Caco-2 (cell line): ENCODE measurements at regions of chr4 and their contacts with region 1.

Region 1: GRCh38 chr4:22515145-22515887 is 550 bp downstream of the ADGRA3 start:
- DNase-seq: peak; percentile 79 to 83
- H3K4me3 ChIP-seq: peak overlapping the region; percentile 60
- H3K4me3 Mint-ChIP-seq: peak overlapping the region; percentile 95
- H3K27ac Mint-ChIP-seq: peak overlapping the region; percentile 97
- H3K4me1 ChIP-seq: peaks cover 11% of the 10 kb centered on the region
- H3K4me1 Mint-ChIP-seq: peaks cover 10% of the 10 kb centered on the region
- H3K27me3 ChIP-seq: no peaks in the 10 kb centered on the region
- H3K27me3 Mint-ChIP-seq: no peaks in the 10 kb centered on the region
- CTCF ChIP-seq: no peak

Region 2: DNA sequence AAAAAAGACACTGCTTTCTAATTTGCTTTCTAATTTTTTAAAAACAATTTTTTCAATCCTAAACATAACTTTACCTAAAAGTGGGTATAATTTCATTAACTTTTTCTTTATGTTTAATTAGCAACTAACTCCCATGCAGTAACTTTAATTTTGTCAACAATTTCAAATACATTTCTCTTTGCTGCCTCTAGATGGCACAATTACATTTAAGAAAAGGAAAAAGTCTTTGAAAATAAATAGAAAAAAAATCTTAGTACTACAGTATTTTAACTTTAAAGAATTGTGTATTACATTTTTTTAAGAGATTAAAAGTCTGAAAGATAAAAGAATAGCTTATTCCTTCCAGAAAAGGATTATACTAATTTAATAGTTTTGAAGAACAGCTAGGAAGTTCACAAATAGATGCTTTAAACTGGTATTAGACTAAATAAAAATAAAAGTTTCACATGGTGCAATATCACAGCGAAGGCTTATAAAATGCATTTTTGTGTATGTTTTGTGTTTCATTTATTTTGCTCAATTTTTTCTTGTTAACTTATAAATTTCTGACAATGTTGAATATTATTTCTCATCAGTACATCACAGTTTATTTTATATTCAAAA is 104.6 kb before region 1 on chr4:
- CTCF ChIA-PET with region 1: no interaction called
- POLR2A ChIA-PET with region 1: no interaction called
- intact Hi-C with region 1: loop called (anchors 5 kb)
- DNase-seq: no peak
- H3K4me3 ChIP-seq: no peak overlapping the region
- H3K4me3 Mint-ChIP-seq: no peak overlapping the region
- H3K27ac Mint-ChIP-seq: no peak overlapping the region
- H3K4me1 ChIP-seq: no peaks in the 10 kb centered on the region
- H3K4me1 Mint-ChIP-seq: no peaks in the 10 kb centered on the region
- H3K27me3 ChIP-seq: no peaks in the 10 kb centered on the region
- H3K27me3 Mint-ChIP-seq: no peaks in the 10 kb centered on the region
- CTCF ChIP-seq: peak; percentile 33 to 34

Region 3: GRCh38 chr4:22463179-22463578 is 52.1 kb before region 1 on chr4:
- CTCF ChIA-PET with region 1: no interaction called
- POLR2A ChIA-PET with region 1: no interaction called
- intact Hi-C with region 1: loop called (anchors 1 kb)
- DNase-seq: peak in 1 of 2 experiments; percentile 35
- H3K4me3 ChIP-seq: no peak overlapping the region
- H3K4me3 Mint-ChIP-seq: no peak overlapping the region
- H3K27ac Mint-ChIP-seq: no peak overlapping the region
- H3K4me1 ChIP-seq: peaks cover 34% of the 10 kb centered on the region
- H3K4me1 Mint-ChIP-seq: peaks cover 40% of the 10 kb centered on the region
- H3K27me3 ChIP-seq: no peaks in the 10 kb centered on the region
- H3K27me3 Mint-ChIP-seq: no peaks in the 10 kb centered on the region
- CTCF ChIP-seq: no peak

Region 4: GRCh38 chr4:22502895-22503814 is 12.2 kb before region 1 on chr4:
- CTCF ChIA-PET with region 1: interaction called, 4 read pairs
- POLR2A ChIA-PET with region 1: interaction called, 14 read pairs
- intact Hi-C with region 1: loop called (anchors 1 kb)
- DNase-seq: no peak
- H3K4me3 ChIP-seq: no peak overlapping the region
- H3K4me3 Mint-ChIP-seq: no peak overlapping the region
- H3K27ac Mint-ChIP-seq: no peak overlapping the region
- H3K4me1 ChIP-seq: peaks cover 30% of the 10 kb centered on the region
- H3K4me1 Mint-ChIP-seq: peaks cover 8% of the 10 kb centered on the region
- H3K27me3 ChIP-seq: no peaks in the 10 kb centered on the region
- H3K27me3 Mint-ChIP-seq: no peaks in the 10 kb centered on the region
- CTCF ChIP-seq: no peak

Region 5: GRCh38 chr4:22607382-22607781 is 92.1 kb after region 1 on chr4:
- CTCF ChIA-PET with region 1: no interaction called
- POLR2A ChIA-PET with region 1: no interaction called
- intact Hi-C with region 1: loop called (anchors 5 kb)
- DNase-seq: peak; percentile 51 to 57
- H3K4me3 ChIP-seq: no peak overlapping the region
- H3K4me3 Mint-ChIP-seq: no peak overlapping the region
- H3K27ac Mint-ChIP-seq: no peak overlapping the region
- H3K4me1 ChIP-seq: no peaks in the 10 kb centered on the region
- H3K4me1 Mint-ChIP-seq: no peaks in the 10 kb centered on the region
- H3K27me3 ChIP-seq: no peaks in the 10 kb centered on the region
- H3K27me3 Mint-ChIP-seq: peaks cover 6% of the 10 kb centered on the region
- CTCF ChIP-seq: peak; percentile 45 to 78